Activated naive CD4-positive, alpha-beta T cell treated with anti-CD3 and anti-CD28 coated beads, Interleukin-2, amount 10 ng/mL, durations not matched to agents 7 days and 5 days (primary cell): ENCODE measurements at regions of chr13 and their contacts with region 1.

Region 1: GRCh38 chr13:95378603-95379002 is 77.4 kb upstream of the ABCC4 start:
- DNase-seq: no peak
- H3K4me3 Mint-ChIP-seq: no peak overlapping the region
- H3K27ac Mint-ChIP-seq: no peak overlapping the region
- H3K4me1 Mint-ChIP-seq: peaks cover 6% of the 10 kb centered on the region
- H3K27me3 Mint-ChIP-seq: peaks cover 6% of the 10 kb centered on the region

Region 2: GRCh38 chr13:95301183-95301967 is 77.2 kb before region 1 on chr13 and contains the start of gene ABCC4:
- CTCF ChIA-PET with region 1: interaction called, 16 read pairs
- DNase-seq: peak; percentile 66
- H3K4me3 Mint-ChIP-seq: peak within 1 kb of the TSS; percentile 77
- H3K27ac Mint-ChIP-seq: no peak within 1 kb of the TSS
- H3K4me1 Mint-ChIP-seq: peaks cover 21% of the 10 kb centered on the region
- H3K27me3 Mint-ChIP-seq: peaks cover 19% of the 10 kb centered on the region

Region 3: DNA sequence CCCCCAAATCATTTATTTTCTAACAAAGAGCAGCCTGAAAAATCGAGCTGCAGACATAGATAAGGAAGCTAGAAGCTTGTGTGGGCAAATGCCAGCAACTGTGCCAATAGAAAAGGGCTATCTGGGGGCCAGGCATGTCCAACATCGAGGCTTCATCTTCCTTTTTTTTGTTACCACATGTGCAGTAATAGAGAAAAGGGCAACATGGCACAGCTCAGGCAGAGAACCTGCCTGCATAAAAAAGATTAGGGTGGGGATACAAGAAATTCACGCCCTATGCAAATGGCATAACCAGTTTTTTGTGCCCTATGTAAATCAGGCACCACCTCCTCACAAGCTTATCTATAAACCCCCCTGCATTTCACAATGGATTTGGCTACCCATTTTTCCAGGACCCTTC is 16.9 kb before region 1 on chr13:
- CTCF ChIA-PET with region 1: no interaction called
- DNase-seq: no peak
- H3K4me3 Mint-ChIP-seq: no peak overlapping the region
- H3K27ac Mint-ChIP-seq: no peak overlapping the region
- H3K4me1 Mint-ChIP-seq: no peaks in the 10 kb centered on the region
- H3K27me3 Mint-ChIP-seq: peaks cover 12% of the 10 kb centered on the region